Calu3 (cell line): ENCODE measurements at regions of chr6 and their contacts with region 1.

Region 1: DNA sequence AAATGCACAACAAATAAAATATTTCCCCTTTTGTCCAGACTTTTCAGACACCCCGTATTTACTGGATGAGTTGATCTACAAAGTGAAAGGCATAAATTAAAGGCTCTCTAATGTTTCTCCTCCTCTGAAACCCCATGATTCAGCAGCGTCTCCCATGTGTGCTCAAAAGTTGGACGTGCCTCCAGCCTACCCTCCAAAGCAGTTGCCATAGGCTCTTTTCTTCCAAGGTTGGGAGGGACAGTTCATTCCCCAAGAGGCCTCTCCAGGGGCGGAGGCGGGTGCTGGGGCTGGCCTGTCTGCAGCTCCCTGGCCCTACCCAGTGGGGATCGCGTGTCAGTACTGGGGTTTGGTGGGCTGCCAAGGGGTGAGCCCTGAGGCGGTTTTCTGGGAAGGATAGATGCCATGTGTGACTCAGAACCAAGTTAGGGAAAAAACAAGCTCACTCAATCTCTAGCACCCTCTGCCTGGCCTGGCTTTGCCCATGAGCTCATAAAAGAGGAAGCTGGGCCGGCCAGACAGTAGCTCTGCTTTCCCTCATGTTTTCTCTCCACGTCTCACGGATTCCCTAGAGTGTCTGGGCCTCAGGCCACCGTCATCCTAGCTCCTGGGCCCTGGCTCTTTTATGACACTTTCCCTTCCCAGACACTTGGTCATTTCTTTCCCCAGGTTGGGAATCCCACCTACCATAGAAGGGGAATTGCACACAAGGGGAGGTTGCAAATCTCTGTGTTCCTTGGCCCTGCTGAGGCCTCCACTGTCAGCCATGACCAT is 8.0 kb upstream of the IER3 start:
- DNase-seq: peak; percentile 100
- H3K4me3 Mint-ChIP-seq: peak overlapping the region; percentile 25
- H3K27ac Mint-ChIP-seq: peak overlapping the region; percentile 95
- H3K4me1 Mint-ChIP-seq: peaks cover 56% of the 10 kb centered on the region
- H3K27me3 Mint-ChIP-seq: no peaks in the 10 kb centered on the region
- CTCF ChIP-seq: no peak

Region 2: GRCh38 chr6:30763302-30764193 is 11.2 kb after region 1 on chr6:
- CTCF ChIA-PET with region 1: interaction called, 36 read pairs
- intact Hi-C with region 1: loop called (anchors 1 kb)
- DNase-seq: peak; percentile 77
- H3K4me3 Mint-ChIP-seq: peak overlapping the region; percentile 27
- H3K27ac Mint-ChIP-seq: peak overlapping the region; percentile 88
- H3K4me1 Mint-ChIP-seq: peaks cover 55% of the 10 kb centered on the region
- H3K27me3 Mint-ChIP-seq: no peaks in the 10 kb centered on the region
- CTCF ChIP-seq: no peak

Region 3: GRCh38 chr6:30769088-30769852 is 16.9 kb after region 1 on chr6:
- CTCF ChIA-PET with region 1: interaction called, 36 read pairs
- intact Hi-C with region 1: loop called (anchors 2 kb)
- DNase-seq: peak; percentile 93
- H3K4me3 Mint-ChIP-seq: peak overlapping the region; percentile 53
- H3K27ac Mint-ChIP-seq: peak overlapping the region; percentile 93
- H3K4me1 Mint-ChIP-seq: peaks cover 69% of the 10 kb centered on the region
- H3K27me3 Mint-ChIP-seq: no peaks in the 10 kb centered on the region
- CTCF ChIP-seq: no peak

Region 4: GRCh38 chr6:30821862-30822782 is 69.8 kb after region 1 on chr6:
- CTCF ChIA-PET with region 1: interaction called, 16 read pairs
- intact Hi-C with region 1: loop called (anchors 2 kb)
- DNase-seq: peak; percentile 50
- H3K4me3 Mint-ChIP-seq: no peak overlapping the region
- H3K27ac Mint-ChIP-seq: peak overlapping the region; percentile 43
- H3K4me1 Mint-ChIP-seq: peaks cover 65% of the 10 kb centered on the region
- H3K27me3 Mint-ChIP-seq: no peaks in the 10 kb centered on the region
- CTCF ChIP-seq: peak; percentile 71